Breast epithelium (tissue), 4 donors: ENCODE measurements at regions of chr4 and their contacts with region 1.

Region 1: DNA sequence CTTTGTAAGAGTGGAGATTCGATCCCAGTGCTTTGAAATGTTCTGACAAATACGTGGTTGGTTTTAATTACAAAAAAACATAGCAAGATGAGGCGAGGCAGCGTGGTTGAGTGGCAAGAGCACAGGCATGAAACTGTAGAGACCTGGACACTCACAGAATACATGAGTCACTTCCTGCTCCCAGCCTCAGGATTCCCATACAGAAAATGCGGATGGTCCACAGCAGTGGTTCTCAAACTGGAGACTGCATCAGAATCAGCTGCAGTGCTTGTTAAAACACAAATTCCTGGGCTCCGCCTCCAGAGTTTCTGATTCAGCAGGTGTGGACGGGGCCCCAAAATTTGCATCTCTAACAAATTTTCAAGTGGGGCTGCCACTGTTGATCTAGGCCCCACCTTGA is 10.1 kb downstream of the OTOP1 start:
- DNase-seq: no peak
- H3K4me3 ChIP-seq: no peak overlapping the region
- H3K27ac ChIP-seq: no peak overlapping the region
- H3K4me1 ChIP-seq: no peaks in the 10 kb centered on the region
- H3K27me3 ChIP-seq: no peaks in the 10 kb centered on the region
- CTCF ChIP-seq: no peak
- POLR2A ChIP-seq: no peak

Region 2: DNA sequence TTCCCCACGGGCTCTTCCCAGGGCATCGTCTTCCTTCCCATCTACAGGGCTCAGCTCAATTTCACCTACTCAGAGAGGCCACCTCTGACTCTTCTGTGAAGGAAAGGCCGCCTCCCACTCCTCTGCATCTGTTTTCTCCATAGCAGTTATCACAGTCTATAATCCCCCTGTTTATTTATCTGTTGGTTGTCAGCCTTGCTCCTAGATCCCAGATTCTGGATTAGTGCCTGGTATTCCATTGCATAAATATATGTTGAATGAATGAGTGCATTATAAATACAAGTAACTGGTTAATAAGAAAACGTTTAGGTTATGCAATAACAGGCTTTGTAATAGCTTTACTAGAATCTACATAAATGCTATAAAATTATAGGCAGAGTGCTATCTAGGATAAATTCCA is 223.1 kb after region 1 on chr4:
- intact Hi-C with region 1: loop called (anchors 5 kb)
- DNase-seq: no peak
- H3K4me3 ChIP-seq: no peak overlapping the region
- H3K27ac ChIP-seq: no peak overlapping the region
- H3K4me1 ChIP-seq: no peaks in the 10 kb centered on the region
- H3K27me3 ChIP-seq: no peaks in the 10 kb centered on the region
- CTCF ChIP-seq: no peak
- POLR2A ChIP-seq: no peak

Region 3: GRCh38 chr4:6047130-6047672 is 1830.6 kb after region 1 on chr4:
- intact Hi-C with region 1: loop called (anchors 5 kb)
- DNase-seq: no peak
- H3K4me3 ChIP-seq: no peak overlapping the region
- H3K27ac ChIP-seq: no peak overlapping the region
- H3K4me1 ChIP-seq: no peaks in the 10 kb centered on the region
- H3K27me3 ChIP-seq: peaks cover 0 to 59% of the 10 kb centered on the region in 2 donors
- CTCF ChIP-seq: no peak
- POLR2A ChIP-seq: no peak